ENCODE measurements at regions of chr7 and their contacts with region 1.

Region 1: GRCh38 chr7:1044191-1045068 is at the start of gene GPR146:
- DNase-seq: no peak
- ATAC-seq: peak; percentile 98
- H3K4me3 ChIP-seq: peak within 1 kb of the TSS; percentile 60; the same call in 1 of the 2 replicates
- H3K27ac ChIP-seq: peak within 1 kb of the TSS; percentile 68
- H3K4me1 ChIP-seq: peaks cover 14% of the 10 kb centered on the region
- H3K27me3 ChIP-seq: no peaks in the 10 kb centered on the region
- CTCF ChIP-seq: peak; percentile 53 to 66 (median 63)
- EP300 ChIP-seq: no peak
- POLR2A ChIP-seq: peak; percentile 71
- RAD21 ChIP-seq: no peak; the same call in 1 of the 2 replicates
- polyA plus RNA-seq, gene GPR146: not detected

Region 2: GRCh38 chr7:1059200-1060091 is 15.0 kb after region 1 on chr7:
- CTCF ChIA-PET with region 1: interaction called, 6 read pairs
- POLR2A ChIA-PET with region 1: interaction called, 8 read pairs
- RAD21 ChIA-PET with region 1: interaction called, 4 read pairs
- SMC1A ChIA-PET with region 1: interaction called, 11 read pairs
- in situ Hi-C with region 1: no loop called
- intact Hi-C with region 1: loop called (anchors 1 kb)
- DNase-seq: peak; percentile 33
- ATAC-seq: peak; percentile 69
- H3K4me3 ChIP-seq: no peak overlapping the region
- H3K27ac ChIP-seq: no peak overlapping the region
- H3K4me1 ChIP-seq: peaks cover 33% of the 10 kb centered on the region
- H3K27me3 ChIP-seq: no peaks in the 10 kb centered on the region
- CTCF ChIP-seq: no peak
- EP300 ChIP-seq: no peak
- POLR2A ChIP-seq: no peak
- RAD21 ChIP-seq: no peak